Breast epithelium (tissue), 4 donors: ENCODE measurements at regions of chr17 and their contacts with region 1.

Region 1: GRCh38 chr17:60720763-60721531 is 43.3 kb downstream of the BCAS3 start:
- DNase-seq: no peak
- H3K4me3 ChIP-seq: no peak overlapping the region
- H3K27ac ChIP-seq: no peak overlapping the region
- H3K4me1 ChIP-seq: no peaks in the 10 kb centered on the region
- H3K27me3 ChIP-seq: no peaks in the 10 kb centered on the region
- CTCF ChIP-seq: peak; percentile 67 to 73 (median 72)
- POLR2A ChIP-seq: no peak

Region 2: GRCh38 chr17:60947100-60947499 is 226.2 kb after region 1 on chr17:
- intact Hi-C with region 1: no loop called
- DNase-seq: no peak
- H3K4me3 ChIP-seq: no peak overlapping the region
- H3K27ac ChIP-seq: no peak overlapping the region
- H3K4me1 ChIP-seq: no peaks in the 10 kb centered on the region
- H3K27me3 ChIP-seq: no peaks in the 10 kb centered on the region
- CTCF ChIP-seq: no peak
- POLR2A ChIP-seq: no peak

Region 3: GRCh38 chr17:61399131-61400057 is 678.4 kb after region 1 on chr17 and contains the start of gene TBX2:
- intact Hi-C with region 1: loop called (anchors 5 kb)
- DNase-seq: peak in 1 of 2 donors; percentile 64
- H3K4me3 ChIP-seq: peak within 1 kb of the TSS; percentile 53 to 95 (median 68)
- H3K27ac ChIP-seq: peak within 1 kb of the TSS; percentile 78 to 94
- H3K4me1 ChIP-seq: peaks cover 0 to 3% of the 10 kb centered on the region in 2 donors
- H3K27me3 ChIP-seq: peaks cover 12 to 24% of the 10 kb centered on the region in 2 donors
- CTCF ChIP-seq: no peak
- POLR2A ChIP-seq: no peak
- total RNA-seq, gene TBX2: 4.8 to 8.5 (median 5.7) TPM